GM12878 (cell line): ENCODE measurements at regions of chr13 and their contacts with region 1.

Region 1: GRCh38 chr13:77002590-77003190 is 10.8 kb downstream of the CLN5 start:
- DNase-seq: no peak
- ATAC-seq: peak; percentile 47
- H3K4me3 ChIP-seq: no peak overlapping the region
- H3K27ac ChIP-seq: no peak overlapping the region
- H3K4me1 ChIP-seq: 0 out of 2 replicates have a peak, but pooled peaks cover 3% of the 10 kb centered on the region
- H3K27me3 ChIP-seq: no peaks in the 10 kb centered on the region
- CTCF ChIP-seq: peak; percentile 44 to 56 (median 54); a peak in 4 of 6 replicates
- EP300 ChIP-seq: no peak
- POLR2A ChIP-seq: no peak
- RAD21 ChIP-seq: peak; percentile 34; the same call in 1 of the 2 replicates

Region 2: GRCh38 chr13:76980075-76980718 is 22.5 kb before region 1 on chr13:
- CTCF ChIA-PET with region 1: interaction called, 24 read pairs
- POLR2A ChIA-PET with region 1: interaction called, 4 read pairs
- RAD21 ChIA-PET with region 1: interaction called, 6 read pairs
- SMC1A ChIA-PET with region 1: interaction called, 5 read pairs
- in situ Hi-C with region 1: no loop called
- intact Hi-C with region 1: no loop called
- DNase-seq: no peak
- ATAC-seq: peak; percentile 100
- H3K4me3 ChIP-seq: no peak overlapping the region
- H3K27ac ChIP-seq: no peak overlapping the region
- H3K4me1 ChIP-seq: no peaks in the 10 kb centered on the region
- H3K27me3 ChIP-seq: peaks cover 0 to 2% of the 10 kb centered on the region in 2 experiments; a peak in 2 of 4 replicates
- CTCF ChIP-seq: peak; percentile 89 to 99 (median 94)
- EP300 ChIP-seq: no peak
- POLR2A ChIP-seq: no peak
- RAD21 ChIP-seq: peak; percentile 78

Region 3: GRCh38 chr13:77016888-77017623 is 14.4 kb after region 1 on chr13:
- CTCF ChIA-PET with region 1: interaction called, 18 read pairs
- POLR2A ChIA-PET with region 1: interaction called, 4 read pairs
- RAD21 ChIA-PET with region 1: no interaction called
- SMC1A ChIA-PET with region 1: interaction called, 5 read pairs
- in situ Hi-C with region 1: no loop called
- intact Hi-C with region 1: no loop called
- DNase-seq: no peak
- ATAC-seq: peak; percentile 17; the same call in 1 of the 3 replicates
- H3K4me3 ChIP-seq: no peak overlapping the region
- H3K27ac ChIP-seq: no peak overlapping the region
- H3K4me1 ChIP-seq: peaks cover 3% of the 10 kb centered on the region; the same call in 1 of the 2 replicates
- H3K27me3 ChIP-seq: no peaks in the 10 kb centered on the region
- CTCF ChIP-seq: peak in 1 of 3 experiments; percentile 6; a peak in 1 of 6 replicates
- EP300 ChIP-seq: no peak
- POLR2A ChIP-seq: no peak
- RAD21 ChIP-seq: no peak

Region 4: DNA sequence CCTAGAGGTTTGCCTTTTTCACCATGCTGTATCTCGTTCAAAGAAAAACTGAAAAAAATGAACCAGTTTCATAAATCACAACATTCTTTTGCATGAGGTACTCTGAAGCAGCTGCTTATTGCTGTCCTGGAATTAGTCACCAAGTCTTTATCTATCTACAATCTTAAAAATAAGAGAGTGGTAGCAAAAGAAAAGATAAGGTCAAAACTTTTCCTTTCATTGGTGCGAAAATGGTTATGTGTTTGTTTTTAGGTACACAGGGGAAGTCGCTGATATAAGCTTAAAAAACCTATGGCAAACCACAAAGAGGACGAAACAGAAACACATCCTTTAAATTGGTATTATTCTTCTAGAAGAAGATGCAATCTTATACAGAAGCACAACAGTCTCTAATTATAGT is 1635.5 kb after region 1 on chr13:
- CTCF ChIA-PET with region 1: no interaction called
- POLR2A ChIA-PET with region 1: no interaction called
- RAD21 ChIA-PET with region 1: no interaction called
- SMC1A ChIA-PET with region 1: no interaction called
- in situ Hi-C with region 1: loop called (anchors 25 kb)
- intact Hi-C with region 1: no loop called
- DNase-seq: no peak
- ATAC-seq: no peak
- H3K4me3 ChIP-seq: no peak overlapping the region
- H3K27ac ChIP-seq: no peak overlapping the region
- H3K4me1 ChIP-seq: peaks cover 11% of the 10 kb centered on the region
- H3K27me3 ChIP-seq: no peaks in the 10 kb centered on the region
- CTCF ChIP-seq: no peak
- EP300 ChIP-seq: no peak
- POLR2A ChIP-seq: no peak
- RAD21 ChIP-seq: no peak